ENCODE measurements at regions of chr9 and their contacts with region 1.

Region 1: GRCh38 chr9:130053504-130054324 is at the start of gene GPR107:
- DNase-seq: peak; percentile 87 to 93 (median 91)
- ATAC-seq: peak; percentile 97
- H3K4me3 ChIP-seq: peak within 1 kb of the TSS; percentile 99
- H3K27ac ChIP-seq: peak within 1 kb of the TSS; percentile 86
- H3K4me1 ChIP-seq: peaks cover 9 to 28% of the 10 kb centered on the region in 2 experiments; a peak in 4 of 5 replicates
- H3K27me3 ChIP-seq: no peaks in the 10 kb centered on the region
- CTCF ChIP-seq: no peak
- EP300 ChIP-seq: no peak; the same call in 1 of the 2 replicates
- POLR2A ChIP-seq: peak; percentile 89
- RAD21 ChIP-seq: 0 out of 4 replicates have a peak, but pooled peaks of 1 of the 2 experiments have one; percentile 7
- polyA plus RNA-seq, gene GPR107: 3.2 to 3.5 TPM

Region 2: DNA sequence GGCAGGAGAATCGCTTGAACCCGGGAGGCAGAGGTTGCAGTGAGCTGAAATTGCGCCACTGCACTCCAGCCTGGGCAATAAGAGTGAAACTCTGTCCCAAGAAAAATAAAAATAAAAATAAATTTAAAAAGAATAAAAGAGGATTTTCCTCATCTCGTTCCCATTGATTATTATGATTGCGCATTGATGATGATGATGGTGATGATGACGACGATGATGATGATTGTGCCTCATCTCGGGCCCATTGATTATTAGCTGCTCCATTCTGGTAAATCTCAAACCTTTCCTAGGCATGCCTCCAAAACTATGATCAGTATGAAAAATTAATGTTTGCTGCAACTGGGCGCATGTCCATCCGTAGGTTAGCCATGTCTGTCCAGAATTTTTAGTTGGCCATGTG is 12.5 kb after region 1 on chr9:
- CTCF ChIA-PET with region 1: no interaction called
- POLR2A ChIA-PET with region 1: interaction called, 10 read pairs
- in situ Hi-C with region 1: no loop called
- intact Hi-C with region 1: no loop called
- DNase-seq: no peak
- ATAC-seq: no peak
- H3K4me3 ChIP-seq: no peak overlapping the region
- H3K27ac ChIP-seq: no peak overlapping the region
- H3K4me1 ChIP-seq: peaks cover 0 to 9% of the 10 kb centered on the region in 2 experiments; a peak in 3 of 5 replicates
- H3K27me3 ChIP-seq: no peaks in the 10 kb centered on the region
- CTCF ChIP-seq: no peak
- EP300 ChIP-seq: no peak
- POLR2A ChIP-seq: no peak
- RAD21 ChIP-seq: no peak

Region 3: GRCh38 chr9:130095872-130096271 is 42.2 kb after region 1 on chr9:
- CTCF ChIA-PET with region 1: no interaction called
- POLR2A ChIA-PET with region 1: no interaction called
- in situ Hi-C with region 1: no loop called
- intact Hi-C with region 1: loop called (anchors 5 kb)
- DNase-seq: no peak
- ATAC-seq: no peak
- H3K4me3 ChIP-seq: no peak overlapping the region
- H3K27ac ChIP-seq: no peak overlapping the region
- H3K4me1 ChIP-seq: no peaks in the 10 kb centered on the region
- H3K27me3 ChIP-seq: no peaks in the 10 kb centered on the region
- CTCF ChIP-seq: no peak
- EP300 ChIP-seq: no peak
- POLR2A ChIP-seq: no peak
- RAD21 ChIP-seq: no peak

Region 4: GRCh38 chr9:130220352-130220751 is 166.6 kb after region 1 on chr9:
- CTCF ChIA-PET with region 1: no interaction called
- POLR2A ChIA-PET with region 1: no interaction called
- in situ Hi-C with region 1: no loop called
- intact Hi-C with region 1: no loop called
- DNase-seq: no peak
- ATAC-seq: peak; percentile 73
- H3K4me3 ChIP-seq: no peak overlapping the region
- H3K27ac ChIP-seq: no peak overlapping the region
- H3K4me1 ChIP-seq: peaks cover 0 to 15% of the 10 kb centered on the region in 2 experiments; a peak in 2 of 5 replicates
- H3K27me3 ChIP-seq: no peaks in the 10 kb centered on the region
- CTCF ChIP-seq: no peak
- EP300 ChIP-seq: no peak
- POLR2A ChIP-seq: no peak
- RAD21 ChIP-seq: no peak

Measured in K562 (cell line).